ENCODE measurements at regions of chr3 and their contacts with region 1.

Region 1: DNA sequence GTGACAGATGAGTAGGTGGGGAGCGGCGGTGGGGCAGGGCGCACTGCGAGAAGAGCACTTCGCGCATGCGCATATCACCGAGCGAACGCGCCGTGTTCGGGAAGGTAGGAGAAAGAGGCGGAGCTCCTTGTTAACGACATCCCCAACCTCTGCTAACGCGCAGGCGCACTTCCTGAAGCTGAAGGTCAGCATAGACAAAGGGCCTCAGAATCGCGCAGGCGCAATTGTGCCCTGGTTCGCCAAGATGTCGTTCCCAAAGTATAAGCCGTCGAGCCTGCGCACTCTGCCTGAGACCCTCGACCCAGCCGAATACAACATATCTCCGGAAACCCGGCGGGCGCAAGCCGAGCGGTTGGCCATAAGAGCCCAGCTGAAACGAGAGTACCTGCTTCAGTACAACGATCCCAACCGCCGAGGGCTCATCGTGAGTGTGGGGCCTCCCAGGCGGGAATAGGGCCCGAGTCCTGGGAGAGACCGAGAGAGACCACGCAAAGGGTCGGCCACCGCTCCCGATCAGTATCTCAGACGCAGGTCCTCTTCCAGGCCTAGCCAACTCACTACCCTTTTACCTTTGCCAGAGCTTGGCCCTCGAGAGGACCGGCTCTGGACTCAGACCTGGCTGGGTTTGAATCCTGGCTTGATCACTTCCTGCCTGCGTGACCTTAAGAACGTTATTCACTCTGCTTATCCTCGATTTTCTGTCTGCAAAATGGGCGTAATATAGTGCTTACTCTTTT is at the start of gene NDUFB4:
- DNase-seq: peak; percentile 89 to 99
- ATAC-seq: peak; percentile 95 to 98 (median 96)
- H3K4me3 ChIP-seq: peak within 1 kb of the TSS; percentile 92
- H3K4me3 Mint-ChIP-seq: peak within 1 kb of the TSS; percentile 95
- H3K27ac ChIP-seq: peak within 1 kb of the TSS; percentile 93
- H3K27ac Mint-ChIP-seq: no peak within 1 kb of the TSS
- H3K4me1 ChIP-seq: no peaks in the 10 kb centered on the region
- H3K4me1 Mint-ChIP-seq: peaks cover 6 to 13% of the 10 kb centered on the region in 2 donors
- H3K27me3 ChIP-seq: no peaks in the 10 kb centered on the region
- H3K27me3 Mint-ChIP-seq: peaks cover 8 to 13% of the 10 kb centered on the region in 2 donors
- CTCF ChIP-seq: no peak
- total RNA-seq, gene NDUFB4: 59.5 to 86.9 (median 65.2) TPM

Region 2: DNA sequence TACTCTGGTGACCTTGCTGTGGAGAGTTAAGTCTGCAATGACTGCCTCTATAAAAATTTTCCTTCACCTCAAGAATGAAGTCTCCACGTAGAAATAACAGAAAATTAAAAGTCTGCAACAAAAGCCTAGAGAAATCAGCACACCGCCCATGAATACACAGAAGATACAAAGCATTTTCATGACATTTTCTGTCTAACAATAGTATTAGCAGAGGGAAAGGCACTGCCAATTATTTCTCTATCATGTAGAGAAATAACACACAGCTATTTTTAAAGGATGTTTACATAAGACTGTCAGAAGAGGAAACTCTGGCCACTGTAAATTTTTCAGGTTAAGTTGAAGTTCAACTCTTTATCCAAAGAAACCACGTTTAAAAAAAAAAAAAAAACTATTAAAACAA is 582.8 kb before region 1 on chr3:
- intact Hi-C with region 1: no loop called
- DNase-seq: no peak
- ATAC-seq: no peak
- H3K4me3 ChIP-seq: no peak overlapping the region
- H3K4me3 Mint-ChIP-seq: no peak overlapping the region
- H3K27ac ChIP-seq: no peak overlapping the region
- H3K27ac Mint-ChIP-seq: peak overlapping the region; percentile 6 to 19
- H3K4me1 ChIP-seq: peaks cover 7% of the 10 kb centered on the region
- H3K4me1 Mint-ChIP-seq: peaks cover 83 to 84% of the 10 kb centered on the region in 2 donors
- H3K27me3 ChIP-seq: no peaks in the 10 kb centered on the region
- H3K27me3 Mint-ChIP-seq: no peaks in the 10 kb centered on the region
- CTCF ChIP-seq: no peak

Region 3: GRCh38 chr3:120726784-120727183 is 130.5 kb after region 1 on chr3:
- intact Hi-C with region 1: no loop called
- DNase-seq: no peak
- ATAC-seq: no peak
- H3K4me3 ChIP-seq: no peak overlapping the region
- H3K4me3 Mint-ChIP-seq: no peak overlapping the region
- H3K27ac ChIP-seq: no peak overlapping the region
- H3K27ac Mint-ChIP-seq: no peak overlapping the region
- H3K4me1 ChIP-seq: no peaks in the 10 kb centered on the region
- H3K4me1 Mint-ChIP-seq: no peaks in the 10 kb centered on the region
- H3K27me3 ChIP-seq: no peaks in the 10 kb centered on the region
- H3K27me3 Mint-ChIP-seq: no peaks in the 10 kb centered on the region
- CTCF ChIP-seq: no peak

Region 4: GRCh38 chr3:120742198-120742849 is 146.0 kb after region 1 on chr3 and contains the starts of genes GTF2E1 and RABL3:
- intact Hi-C with region 1: loop called (anchors 1 kb)
- DNase-seq: peak; percentile 97 to 99
- ATAC-seq: peak; percentile 94 to 99 (median 96)
- H3K4me3 ChIP-seq: peak within 1 kb of the TSS; percentile 91
- H3K4me3 Mint-ChIP-seq: peak within 1 kb of the TSS; percentile 95
- H3K27ac ChIP-seq: peak within 1 kb of the TSS; percentile 100
- H3K27ac Mint-ChIP-seq: peak within 1 kb of the TSS; percentile 97 to 99
- H3K4me1 ChIP-seq: peaks cover 14% of the 10 kb centered on the region
- H3K4me1 Mint-ChIP-seq: peaks cover 34 to 41% of the 10 kb centered on the region in 2 donors
- H3K27me3 ChIP-seq: no peaks in the 10 kb centered on the region
- H3K27me3 Mint-ChIP-seq: no peaks in the 10 kb centered on the region
- CTCF ChIP-seq: no peak
- total RNA-seq, gene GTF2E1: 10.9 to 15.7 (median 12.7) TPM
- total RNA-seq, gene RABL3: 11.7 to 18.4 (median 16.7) TPM

Measured in natural killer cell (primary cell).